Activated B cell treated with CpG ODN at 0.5 μM for 24 hours (primary cell): ENCODE measurements at regions of chr15 and their contacts with region 1.

Region 1: GRCh38 chr15:64263567-64263966 is 92.4 kb downstream of the CSNK1G1 start:
- DNase-seq: no peak
- ATAC-seq: no peak
- H3K4me3 Mint-ChIP-seq: peak overlapping the region; percentile 3
- H3K27ac Mint-ChIP-seq: peak overlapping the region; percentile 52
- H3K4me1 Mint-ChIP-seq: peaks cover 40% of the 10 kb centered on the region
- H3K27me3 Mint-ChIP-seq: no peaks in the 10 kb centered on the region
- CTCF ChIP-seq: no peak

Region 2: DNA sequence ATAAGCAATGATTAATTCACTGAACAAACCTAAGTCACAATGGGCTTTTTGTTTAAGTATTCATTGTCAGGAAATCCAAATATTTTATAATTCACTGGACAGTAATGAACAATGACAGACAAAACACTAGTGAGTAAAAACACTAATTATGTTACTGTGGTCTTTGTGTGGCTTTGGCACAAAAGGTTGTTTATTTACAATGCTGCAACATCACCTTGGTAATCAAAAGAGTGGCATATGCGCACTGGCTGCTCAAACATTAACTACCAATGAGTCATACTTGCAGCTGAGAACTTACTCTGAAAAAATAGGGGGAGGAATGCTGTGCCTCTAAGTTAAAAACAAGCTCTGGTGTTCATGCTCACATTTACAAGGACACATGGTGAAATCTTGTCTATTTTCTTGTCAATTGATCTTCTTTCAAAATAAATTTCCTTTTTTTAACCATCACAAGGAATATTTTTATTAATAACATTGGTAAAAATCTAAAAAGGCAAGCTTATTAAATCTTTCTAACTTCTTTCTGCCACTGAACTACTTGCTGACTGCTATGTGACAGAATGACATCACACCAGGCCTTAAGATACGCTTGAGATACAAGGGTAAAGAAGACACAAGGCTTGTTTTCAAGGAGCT is 15.5 kb before region 1 on chr15:
- CTCF ChIA-PET with region 1: no interaction called
- POLR2A ChIA-PET with region 1: interaction called, 19 read pairs
- intact Hi-C with region 1: no loop called
- DNase-seq: no peak
- ATAC-seq: peak; percentile 54
- H3K4me3 Mint-ChIP-seq: no peak overlapping the region
- H3K27ac Mint-ChIP-seq: no peak overlapping the region
- H3K4me1 Mint-ChIP-seq: peaks cover 14% of the 10 kb centered on the region
- H3K27me3 Mint-ChIP-seq: no peaks in the 10 kb centered on the region
- CTCF ChIP-seq: no peak

Region 3: DNA sequence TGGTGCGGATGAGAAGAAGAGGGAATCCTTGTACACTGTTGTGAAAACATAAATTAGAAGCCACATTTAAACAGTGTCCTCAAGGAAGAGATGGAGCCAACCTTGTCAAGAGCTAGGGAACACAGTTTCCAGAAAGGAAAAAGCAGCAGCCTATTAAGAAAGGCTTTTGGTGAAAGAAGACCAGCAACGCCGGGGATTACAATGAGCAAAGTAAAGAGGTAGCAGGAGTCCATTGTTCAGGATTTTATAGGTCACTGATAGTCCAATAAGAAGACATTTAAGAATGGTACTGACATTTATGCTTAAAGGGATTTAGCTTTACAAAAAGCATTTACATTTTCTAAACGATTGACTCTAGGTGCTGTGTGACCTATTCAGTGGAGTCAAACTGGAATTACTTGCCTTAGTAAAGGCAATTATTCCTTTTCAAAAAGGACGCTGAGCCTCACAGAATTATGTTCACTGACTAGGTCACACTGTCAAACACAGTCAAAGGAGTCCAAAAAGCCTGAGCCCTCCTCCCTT is 51.6 kb after region 1 on chr15:
- CTCF ChIA-PET with region 1: no interaction called
- POLR2A ChIA-PET with region 1: interaction called, 13 read pairs
- intact Hi-C with region 1: no loop called
- DNase-seq: no peak
- ATAC-seq: no peak
- H3K4me3 Mint-ChIP-seq: no peak overlapping the region
- H3K27ac Mint-ChIP-seq: no peak overlapping the region
- H3K4me1 Mint-ChIP-seq: peaks cover 2% of the 10 kb centered on the region
- H3K27me3 Mint-ChIP-seq: no peaks in the 10 kb centered on the region
- CTCF ChIP-seq: no peak